Right ventricle myocardium superior (tissue), 1 donor: ENCODE measurements at regions of chr17 and their contacts with region 1.

Region 1: DNA sequence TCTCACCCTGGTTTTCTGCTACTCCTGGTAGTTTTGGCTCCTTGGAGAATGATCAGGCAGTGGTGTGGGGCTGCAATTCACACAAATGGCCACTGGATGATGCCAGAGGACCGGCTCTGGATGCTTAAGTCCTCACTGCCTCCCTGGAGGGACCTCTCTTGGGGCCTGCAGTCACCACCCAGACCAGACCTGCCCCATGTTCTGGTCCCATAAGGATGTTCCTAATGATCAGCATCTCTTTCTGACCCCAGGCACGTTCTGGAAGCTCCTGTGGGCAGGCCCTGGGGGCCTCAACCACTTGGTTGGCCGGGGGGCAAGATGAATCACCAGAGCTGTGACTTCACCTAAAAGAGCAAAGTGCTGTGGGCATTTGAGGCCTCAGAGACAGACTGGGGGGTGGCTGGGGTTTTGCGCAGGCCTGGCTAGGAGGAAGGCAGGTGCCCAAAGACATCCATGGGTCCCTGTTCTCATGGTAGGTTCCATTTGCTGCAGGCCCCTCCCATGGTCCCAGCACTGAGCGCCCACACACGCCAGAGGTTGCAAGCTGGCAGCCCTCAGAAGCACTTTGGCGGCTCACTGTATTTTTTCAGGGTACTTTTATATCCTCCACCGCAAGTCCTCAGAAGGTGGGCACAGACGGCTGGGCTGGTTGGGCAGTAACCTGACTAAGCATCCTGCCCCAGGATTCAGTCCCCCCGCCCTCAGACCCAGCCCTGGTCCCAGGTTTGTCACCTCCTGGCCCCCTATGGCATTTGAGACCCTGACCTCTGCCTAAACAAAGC is 53.2 kb downstream of the NT5M start:
- DNase-seq: peak; percentile 83
- ATAC-seq: peak; percentile 90

Region 2: GRCh38 chr17:17416007-17416399 is 59.7 kb after region 1 on chr17:
- intact Hi-C with region 1: loop called (anchors 5 kb)
- DNase-seq: no peak
- ATAC-seq: peak; percentile 28

Region 3: DNA sequence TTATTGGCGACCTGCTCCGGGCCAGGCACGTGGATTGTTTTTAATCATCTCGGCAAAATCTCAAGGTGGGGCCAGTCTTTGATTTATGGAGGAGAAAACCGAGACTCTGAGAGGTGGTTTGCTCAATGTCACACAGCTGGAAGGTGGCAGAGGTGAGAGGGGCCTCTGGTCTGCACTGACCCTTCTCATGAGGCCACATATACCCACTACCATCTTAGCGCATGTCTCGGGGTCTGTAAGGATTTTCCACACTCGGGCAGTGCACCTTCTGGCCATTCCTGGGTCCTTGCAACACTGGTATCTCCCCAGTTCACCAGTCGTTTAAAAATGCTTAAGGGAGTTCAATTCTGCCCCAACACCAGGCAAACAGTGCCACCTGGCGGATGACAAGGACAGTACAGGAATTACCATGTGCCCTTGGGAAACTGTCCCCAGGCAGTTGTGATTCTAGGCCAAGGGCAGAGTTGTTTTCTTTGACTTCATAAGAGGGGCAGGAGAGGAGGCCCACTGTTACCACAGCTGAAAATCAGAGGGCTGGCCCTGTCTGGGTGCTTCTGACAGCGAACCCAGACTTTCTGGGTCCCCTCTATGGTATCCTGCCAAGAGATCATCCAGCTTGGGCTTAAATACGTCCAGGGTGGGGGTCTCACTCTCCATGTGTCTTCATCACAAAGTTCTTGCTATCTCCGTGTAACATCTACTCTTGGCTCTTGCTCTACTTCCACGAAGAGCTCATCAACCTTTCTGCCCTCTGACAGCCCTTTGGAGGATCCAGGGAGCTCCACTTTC is 285.5 kb after region 1 on chr17:
- intact Hi-C with region 1: loop called (anchors 2 kb)
- DNase-seq: peak; percentile 80
- ATAC-seq: peak; percentile 94

Region 4: DNA sequence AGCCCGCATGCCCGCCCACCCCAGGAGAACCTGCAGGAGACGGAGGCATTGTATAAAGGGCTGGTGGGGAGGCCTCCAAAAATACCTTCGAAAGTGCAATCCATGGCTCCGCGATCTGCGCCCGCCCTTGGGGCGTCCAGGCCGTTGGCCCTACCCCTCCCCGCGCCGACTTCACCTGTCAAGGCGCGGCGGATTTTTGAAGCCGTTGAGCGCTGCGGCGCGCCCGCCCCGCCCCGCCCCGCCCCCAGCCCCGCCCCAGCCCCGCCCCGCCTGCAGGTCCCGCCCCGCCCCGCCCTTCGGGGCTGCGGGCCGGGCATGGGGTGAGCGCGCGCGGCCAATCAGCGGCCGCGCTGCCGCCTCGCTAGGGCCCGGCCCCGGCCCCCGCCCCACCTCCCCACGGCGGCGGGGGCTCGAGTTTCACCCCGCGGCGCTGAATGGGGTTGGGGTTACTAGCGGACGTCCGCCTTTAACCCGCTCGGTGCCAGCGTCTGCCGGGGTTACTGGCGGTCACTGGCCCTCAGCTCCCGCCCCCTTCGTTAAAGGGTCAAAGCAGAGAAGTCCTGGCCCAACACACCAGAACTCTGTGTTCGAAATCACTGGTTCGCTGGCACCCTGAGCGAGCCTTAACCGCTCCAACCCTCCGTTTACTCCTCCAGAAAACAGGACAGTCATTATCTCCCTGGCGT is 467.2 kb after region 1 on chr17:
- intact Hi-C with region 1: no loop called
- DNase-seq: peak; percentile 92
- ATAC-seq: peak; percentile 89